B cell (primary cell): ENCODE measurements at regions of chr6 and their contacts with region 1.

Region 1: GRCh38 chr6:36692220-36692619 is 5.4 kb upstream of the RAB44 start:
- DNase-seq: peak; percentile 86
- ATAC-seq: peak; percentile 98
- H3K4me3 ChIP-seq: peak overlapping the region in 3 of 5 experiments; percentile 12 to 18 (median 16)
- H3K4me3 Mint-ChIP-seq: peak overlapping the region; percentile 75
- H3K27ac ChIP-seq: peak overlapping the region; percentile 90 to 96
- H3K27ac Mint-ChIP-seq: peak overlapping the region; percentile 97
- H3K4me1 ChIP-seq: peaks cover 76 to 81% of the 10 kb centered on the region in 2 donors
- H3K4me1 Mint-ChIP-seq: peaks cover 81% of the 10 kb centered on the region
- H3K27me3 ChIP-seq: no peaks in the 10 kb centered on the region
- H3K27me3 Mint-ChIP-seq: no peaks in the 10 kb centered on the region
- CTCF ChIP-seq: no peak

Region 2: DNA sequence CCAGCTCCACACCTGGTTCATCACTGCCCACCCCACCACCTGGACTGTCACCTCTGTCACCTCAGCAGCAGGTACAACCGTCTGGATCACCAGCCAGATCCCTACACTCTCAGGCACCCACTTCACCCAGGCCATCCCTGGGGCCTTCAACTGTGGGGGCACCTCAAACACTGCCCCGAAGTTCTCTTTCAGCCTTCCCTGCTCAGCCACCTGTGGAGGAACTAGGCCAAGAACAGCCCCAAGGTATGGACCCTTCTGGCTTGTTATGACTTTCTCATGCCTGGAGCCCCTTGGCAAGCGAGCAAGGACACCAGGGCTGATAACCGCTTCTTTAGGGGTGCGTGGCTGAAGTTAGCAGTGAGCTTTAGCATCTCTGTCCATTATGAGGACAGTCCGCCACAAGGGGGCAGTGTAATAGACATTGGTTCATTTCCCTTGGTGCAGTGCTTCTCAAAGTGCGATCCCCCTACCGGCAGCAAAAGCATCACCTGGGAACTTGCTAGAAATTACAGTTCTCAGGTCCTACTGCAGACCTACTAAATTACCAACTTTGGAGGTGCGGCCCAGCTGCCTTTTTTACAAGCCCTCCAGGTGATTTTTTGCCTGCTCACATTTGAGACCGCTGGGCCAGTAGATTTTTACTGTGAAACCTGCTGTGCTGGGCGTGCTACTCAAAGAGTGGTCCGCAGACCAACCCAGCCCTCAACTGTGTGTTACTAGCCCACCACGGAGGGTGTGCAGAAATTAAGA is 389.8 kb before region 1 on chr6:
- CTCF ChIA-PET with region 1: no interaction called
- POLR2A ChIA-PET with region 1: no interaction called
- intact Hi-C with region 1: loop called (anchors 5 kb)
- DNase-seq: peak; percentile 94
- ATAC-seq: peak; percentile 95
- H3K4me3 ChIP-seq: no peak overlapping the region
- H3K4me3 Mint-ChIP-seq: no peak overlapping the region
- H3K27ac ChIP-seq: no peak overlapping the region
- H3K27ac Mint-ChIP-seq: peak overlapping the region; percentile 57
- H3K4me1 ChIP-seq: no peaks in the 10 kb centered on the region
- H3K4me1 Mint-ChIP-seq: peaks cover 5% of the 10 kb centered on the region
- H3K27me3 ChIP-seq: peaks cover 0 to 6% (median 1%) of the 10 kb centered on the region in 4 experiments
- H3K27me3 Mint-ChIP-seq: peaks cover 23% of the 10 kb centered on the region
- CTCF ChIP-seq: peak; percentile 97

Region 3: DNA sequence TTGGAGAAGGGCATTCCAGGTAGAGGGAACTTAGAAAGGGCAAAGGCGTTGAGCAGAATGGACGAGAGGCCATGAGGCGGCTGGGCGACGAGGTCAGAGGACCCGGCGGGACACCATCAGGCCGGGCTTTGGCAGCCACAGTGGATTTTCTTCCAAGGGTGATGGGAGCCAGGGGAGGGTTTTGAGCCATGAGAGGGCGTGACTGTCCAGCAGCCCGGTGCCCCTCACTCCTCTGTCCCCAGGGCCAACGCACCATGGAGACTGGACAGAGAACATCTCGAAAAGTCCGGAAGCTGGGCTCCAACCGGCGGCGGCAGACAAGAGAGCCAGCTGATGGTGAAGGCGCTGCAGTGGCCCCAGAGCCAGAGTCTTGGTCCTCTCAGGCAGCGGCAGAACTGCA is 11.8 kb after region 1 on chr6:
- CTCF ChIA-PET with region 1: interaction called, 3 read pairs
- POLR2A ChIA-PET with region 1: interaction called, 3 read pairs
- intact Hi-C with region 1: loop called (anchors 2 kb)
- DNase-seq: no peak
- ATAC-seq: no peak
- H3K4me3 ChIP-seq: no peak overlapping the region
- H3K4me3 Mint-ChIP-seq: no peak overlapping the region
- H3K27ac ChIP-seq: no peak overlapping the region
- H3K27ac Mint-ChIP-seq: no peak overlapping the region
- H3K4me1 ChIP-seq: peaks cover 13 to 14% of the 10 kb centered on the region in 2 donors
- H3K4me1 Mint-ChIP-seq: peaks cover 17% of the 10 kb centered on the region
- H3K27me3 ChIP-seq: no peaks in the 10 kb centered on the region
- H3K27me3 Mint-ChIP-seq: peaks cover 3% of the 10 kb centered on the region
- CTCF ChIP-seq: no peak